MCF 10A (cell line): ENCODE measurements at regions of chr17 and their contacts with region 1.

Region 1: DNA sequence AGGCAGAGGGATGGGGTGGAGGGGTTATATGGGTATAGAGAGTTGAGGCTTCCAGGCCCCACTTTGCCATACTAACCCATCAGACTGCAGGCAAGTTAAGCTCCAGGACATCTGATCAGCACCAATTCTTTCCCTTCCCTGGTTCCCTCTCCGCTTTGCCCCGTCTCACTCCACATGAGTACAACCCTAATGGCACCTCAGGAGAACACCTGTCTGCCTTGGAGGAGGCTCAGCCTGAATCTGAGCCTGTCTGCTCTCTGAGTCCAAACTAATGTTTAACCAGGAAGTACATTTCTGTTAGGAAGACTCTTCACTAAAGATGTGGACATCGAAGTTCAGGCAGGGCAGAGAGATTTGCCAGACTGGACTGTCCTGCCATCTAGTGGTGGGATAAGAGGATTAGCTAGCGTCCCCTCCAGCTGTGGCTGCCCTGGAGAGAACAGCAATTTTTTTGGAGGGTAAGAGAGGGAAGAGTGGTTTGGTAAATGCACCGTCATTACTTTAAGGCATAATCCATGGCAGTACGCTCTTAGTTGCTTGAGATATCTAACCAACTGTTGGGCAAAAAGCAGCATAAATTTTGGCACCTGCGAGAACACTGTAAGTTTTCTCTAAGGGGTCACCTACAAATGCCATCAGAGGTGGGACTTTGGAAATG is 29.2 kb upstream of the LRRC75A start:
- DNase-seq: peak; percentile 89
- H3K4me3 Mint-ChIP-seq: no peak overlapping the region
- H3K27ac Mint-ChIP-seq: no peak overlapping the region
- H3K4me1 Mint-ChIP-seq: peaks cover 14% of the 10 kb centered on the region
- H3K27me3 Mint-ChIP-seq: peaks cover 20% of the 10 kb centered on the region
- CTCF ChIP-seq: peak; percentile 81

Region 2: GRCh38 chr17:16353317-16354174 is 167.7 kb before region 1 on chr17 and contains the start of gene CENPV:
- CTCF ChIA-PET with region 1: interaction called, 11 read pairs
- POLR2A ChIA-PET with region 1: no interaction called
- intact Hi-C with region 1: no loop called
- DNase-seq: peak; percentile 11
- H3K4me3 Mint-ChIP-seq: peak within 1 kb of the TSS; percentile 81
- H3K27ac Mint-ChIP-seq: peak within 1 kb of the TSS; percentile 43
- H3K4me1 Mint-ChIP-seq: peaks cover 4% of the 10 kb centered on the region
- H3K27me3 Mint-ChIP-seq: no peaks in the 10 kb centered on the region
- CTCF ChIP-seq: peak; percentile 9
- total RNA-seq, gene CENPV: 22.4 and 27.7 TPM in 2 replicates

Region 3: DNA sequence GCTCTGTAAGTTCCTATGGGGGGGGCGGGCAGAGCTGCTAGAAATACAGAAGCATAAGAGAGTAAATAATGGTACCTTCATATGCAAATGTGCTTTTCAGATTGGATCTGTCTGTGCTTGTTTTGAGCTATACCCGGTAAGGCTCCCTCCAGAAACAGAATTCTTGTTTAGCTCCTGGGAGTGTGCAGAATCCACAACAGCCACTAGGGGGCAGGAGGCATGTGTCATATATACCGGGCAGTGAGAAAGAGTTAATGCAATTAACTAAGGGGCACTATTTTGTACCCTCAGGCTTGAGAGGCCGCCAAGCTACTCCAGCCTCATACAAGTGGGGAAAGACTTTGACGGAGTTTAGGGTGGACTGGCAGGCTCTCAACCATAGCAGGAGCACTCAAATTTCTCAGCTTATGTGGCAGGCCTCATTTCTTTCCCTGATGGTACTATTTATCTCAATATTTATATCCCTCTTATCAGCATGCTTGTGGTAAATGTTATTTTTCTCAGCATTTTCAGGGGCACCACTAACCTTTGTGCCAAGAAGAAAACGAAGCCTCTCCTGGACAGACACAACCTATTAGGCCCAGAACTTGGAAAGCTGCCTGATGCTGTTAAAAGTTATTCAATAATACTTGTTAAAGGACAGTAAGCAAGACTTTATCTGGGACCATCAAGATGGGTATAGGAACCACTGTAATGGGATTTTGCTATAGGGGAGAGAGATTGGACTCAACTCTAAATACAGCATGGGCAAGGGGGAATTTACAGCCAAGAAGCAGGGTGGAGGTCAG is 157.3 kb before region 1 on chr17:
- CTCF ChIA-PET with region 1: interaction called, 80 read pairs
- POLR2A ChIA-PET with region 1: interaction called, 10 read pairs
- intact Hi-C with region 1: loop called (anchors 1 kb)
- DNase-seq: peak; percentile 78
- H3K4me3 Mint-ChIP-seq: no peak overlapping the region
- H3K27ac Mint-ChIP-seq: no peak overlapping the region
- H3K4me1 Mint-ChIP-seq: no peaks in the 10 kb centered on the region
- H3K27me3 Mint-ChIP-seq: no peaks in the 10 kb centered on the region
- CTCF ChIP-seq: peak; percentile 74

Region 4: GRCh38 chr17:16371742-16372141 is 149.5 kb before region 1 on chr17:
- CTCF ChIA-PET with region 1: interaction called, 80 read pairs
- POLR2A ChIA-PET with region 1: interaction called, 3 read pairs
- intact Hi-C with region 1: no loop called
- DNase-seq: no peak
- H3K4me3 Mint-ChIP-seq: no peak overlapping the region
- H3K27ac Mint-ChIP-seq: no peak overlapping the region
- H3K4me1 Mint-ChIP-seq: peaks cover 14% of the 10 kb centered on the region
- H3K27me3 Mint-ChIP-seq: no peaks in the 10 kb centered on the region
- CTCF ChIP-seq: no peak

Region 5: DNA sequence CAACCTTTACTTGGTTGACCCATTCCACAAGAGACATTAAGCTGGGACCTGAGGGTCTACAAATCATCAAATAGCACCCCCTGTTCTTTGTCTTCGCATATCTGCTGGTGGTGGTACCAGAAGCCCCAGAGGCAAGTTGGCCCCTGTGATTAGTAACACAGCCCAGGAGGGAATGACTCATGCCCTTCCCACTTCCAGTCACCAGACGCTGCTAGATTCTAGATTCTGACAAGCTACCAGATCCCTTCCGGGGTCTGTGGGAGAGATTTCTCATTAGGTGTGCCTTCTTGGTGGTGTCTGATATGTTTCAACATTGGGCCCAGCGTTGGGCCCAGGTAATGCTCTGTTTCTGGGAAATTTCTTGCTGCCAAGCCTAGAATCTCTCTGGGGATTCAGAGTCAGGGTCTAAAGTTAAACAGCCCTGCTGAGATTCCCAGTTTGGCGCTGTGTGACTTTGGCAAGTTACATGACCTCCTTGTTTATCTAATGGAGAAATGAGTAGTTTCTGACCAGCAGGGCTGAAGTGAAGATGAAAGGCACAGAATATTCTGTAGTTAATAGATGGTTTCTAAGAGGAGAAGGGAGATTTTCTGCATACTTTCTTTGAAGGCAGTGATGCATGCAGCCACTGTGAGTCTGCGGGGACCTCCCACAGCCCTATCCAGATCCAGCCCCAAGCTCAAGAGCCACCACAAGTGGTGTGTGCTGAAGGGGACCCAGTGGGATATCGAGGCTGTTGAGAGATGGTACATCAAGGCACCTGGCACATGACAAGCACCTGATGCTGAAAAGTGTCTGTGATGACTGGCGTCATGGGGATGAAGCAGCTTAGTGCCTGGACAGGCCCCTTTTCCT is 101.9 kb before region 1 on chr17:
- CTCF ChIA-PET with region 1: no interaction called
- POLR2A ChIA-PET with region 1: no interaction called
- intact Hi-C with region 1: no loop called
- DNase-seq: peak; percentile 89
- H3K4me3 Mint-ChIP-seq: no peak overlapping the region
- H3K27ac Mint-ChIP-seq: peak overlapping the region; percentile 82
- H3K4me1 Mint-ChIP-seq: peaks cover 9% of the 10 kb centered on the region
- H3K27me3 Mint-ChIP-seq: no peaks in the 10 kb centered on the region
- CTCF ChIP-seq: no peak

Region 6: DNA sequence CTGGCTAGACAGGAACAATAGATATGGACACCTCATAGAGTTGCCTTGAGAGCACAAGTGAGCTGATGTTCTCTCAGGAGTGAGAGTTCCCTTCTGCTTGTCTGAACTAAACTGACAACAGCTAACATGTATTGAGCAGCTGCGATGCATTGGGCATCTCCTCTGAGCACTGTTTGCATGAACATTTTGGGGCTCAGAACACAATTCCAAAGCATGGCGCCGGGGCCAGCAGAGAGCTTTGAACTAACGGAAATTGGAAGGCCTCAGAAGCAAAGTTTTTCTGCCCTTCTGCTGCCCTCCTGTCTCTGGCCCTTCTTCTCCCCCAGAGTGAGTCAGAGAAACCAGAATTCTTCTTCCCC is 67.7 kb before region 1 on chr17:
- CTCF ChIA-PET with region 1: interaction called, 173 read pairs
- POLR2A ChIA-PET with region 1: interaction called, 28 read pairs
- intact Hi-C with region 1: loop called (anchors 1 kb)
- DNase-seq: no peak
- H3K4me3 Mint-ChIP-seq: no peak overlapping the region
- H3K27ac Mint-ChIP-seq: no peak overlapping the region
- H3K4me1 Mint-ChIP-seq: no peaks in the 10 kb centered on the region
- H3K27me3 Mint-ChIP-seq: no peaks in the 10 kb centered on the region
- CTCF ChIP-seq: no peak

Region 7: DNA sequence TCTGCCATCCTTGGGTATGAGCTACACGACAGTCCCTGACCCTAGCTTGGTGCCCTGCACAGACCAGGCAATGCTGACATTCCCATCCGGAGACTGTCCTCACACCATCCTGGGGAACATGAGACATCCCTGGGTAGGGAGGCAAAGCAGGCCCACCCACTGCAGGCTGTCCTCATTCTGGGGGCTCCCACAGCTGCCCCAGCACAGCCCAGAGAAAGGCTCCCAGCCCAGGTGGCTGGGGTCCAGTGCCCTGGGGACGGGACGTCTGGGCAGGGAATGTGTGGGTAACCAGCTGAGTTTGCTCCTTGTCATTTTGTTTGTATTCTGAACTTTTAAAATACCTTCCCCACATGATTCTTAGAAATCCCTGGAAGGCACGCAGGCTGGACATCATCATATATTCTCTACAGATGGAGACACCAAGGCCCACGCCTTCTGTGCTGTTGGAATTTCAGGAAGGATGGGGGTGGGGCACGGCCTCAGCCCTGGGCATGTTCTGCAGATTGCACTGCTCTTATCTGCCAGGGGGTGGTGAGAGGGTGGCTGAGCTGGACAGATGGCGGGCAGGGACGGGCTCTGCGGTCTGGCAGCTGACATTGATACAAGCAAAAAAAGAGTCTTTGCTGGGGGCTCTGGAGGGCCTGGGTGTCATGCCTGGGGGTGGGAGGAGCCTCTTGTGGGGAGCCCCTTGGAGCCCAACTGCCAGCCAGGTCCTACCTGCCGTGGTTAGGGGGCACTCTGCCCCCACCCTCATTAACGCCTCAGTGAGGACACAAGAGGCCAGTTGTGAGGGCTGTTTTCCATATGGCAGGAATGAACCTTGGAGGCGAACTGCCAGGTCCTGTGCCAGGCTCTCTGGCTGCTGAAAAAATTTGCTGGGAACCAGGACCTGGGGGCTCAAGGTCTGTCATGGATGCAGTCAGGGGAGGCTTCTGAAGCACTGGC is 57.6 kb before region 1 on chr17:
- CTCF ChIA-PET with region 1: interaction called, 28 read pairs
- POLR2A ChIA-PET with region 1: interaction called, 3 read pairs
- intact Hi-C with region 1: no loop called
- DNase-seq: peak; percentile 54
- H3K4me3 Mint-ChIP-seq: no peak overlapping the region
- H3K27ac Mint-ChIP-seq: no peak overlapping the region
- H3K4me1 Mint-ChIP-seq: peaks cover 7% of the 10 kb centered on the region
- H3K27me3 Mint-ChIP-seq: peaks cover 16% of the 10 kb centered on the region
- CTCF ChIP-seq: no peak

Region 8: DNA sequence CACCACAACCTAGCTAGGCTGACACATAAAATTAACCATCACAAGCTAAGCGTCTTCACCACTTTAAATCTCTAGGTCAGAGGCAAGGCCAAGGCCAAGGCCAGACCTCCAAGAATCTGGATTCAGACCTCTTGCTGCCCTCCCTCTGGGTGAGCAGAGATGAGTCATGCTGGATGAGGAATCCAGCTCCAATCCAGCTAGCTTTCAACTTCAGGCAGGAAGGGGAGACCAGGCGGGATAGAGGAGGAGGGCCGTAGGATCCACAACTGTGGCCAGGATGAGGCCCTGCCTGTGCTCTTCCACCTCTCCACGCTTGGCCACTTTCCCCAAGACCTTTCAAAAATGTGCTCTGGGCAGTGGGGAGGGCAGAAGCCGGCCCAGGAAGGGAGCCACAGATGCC is 43.9 kb before region 1 on chr17:
- CTCF ChIA-PET with region 1: interaction called, 12 read pairs
- POLR2A ChIA-PET with region 1: interaction called, 3 read pairs
- intact Hi-C with region 1: no loop called
- DNase-seq: peak; percentile 78
- H3K4me3 Mint-ChIP-seq: no peak overlapping the region
- H3K27ac Mint-ChIP-seq: no peak overlapping the region
- H3K4me1 Mint-ChIP-seq: no peaks in the 10 kb centered on the region
- H3K27me3 Mint-ChIP-seq: peaks cover 14% of the 10 kb centered on the region
- CTCF ChIP-seq: no peak